Left colon (tissue), 2 donors: ENCODE measurements at regions of chr17 and their contacts with region 1.

Region 1: GRCh38 chr17:56136301-56136700 is 17.0 kb upstream of the ANKFN1 start:
- DNase-seq: no peak
- ATAC-seq: no peak

Region 2: DNA sequence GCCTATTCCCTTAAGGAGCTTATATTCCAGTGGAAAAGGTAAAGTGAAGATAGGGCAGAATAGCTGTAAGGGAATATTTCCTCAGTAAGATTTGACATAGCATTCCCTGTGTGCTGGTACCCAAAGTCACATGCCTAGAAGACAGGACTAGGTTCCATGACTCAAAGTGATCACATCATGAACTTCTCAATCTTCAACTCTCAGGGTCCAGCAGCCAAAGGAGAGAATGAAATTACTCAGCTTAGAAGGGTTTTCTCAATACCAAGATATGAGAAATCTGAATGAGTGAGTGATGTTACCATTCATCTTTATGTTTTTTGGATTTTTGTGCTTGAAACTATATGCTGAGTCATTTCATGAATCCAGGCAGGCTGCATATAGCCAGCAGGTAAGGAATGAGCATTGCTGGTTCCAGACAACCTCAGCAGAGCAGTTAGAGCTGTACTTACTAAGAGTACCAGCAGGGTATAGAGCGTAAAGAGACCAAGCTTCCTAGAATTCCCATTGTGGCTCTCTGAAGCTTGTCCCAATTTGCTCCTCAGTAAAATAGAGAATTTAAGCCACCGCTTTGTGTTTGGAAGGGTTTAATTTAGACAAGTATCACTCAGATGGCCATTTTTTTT is 108.1 kb after region 1 on chr17:
- intact Hi-C with region 1: loop called in 1 of 2 experiments (anchors 10 kb)
- DNase-seq: no peak
- ATAC-seq: no peak